PC-9 (cell line): ENCODE measurements at regions of chrX and their contacts with region 1.

Region 1: DNA sequence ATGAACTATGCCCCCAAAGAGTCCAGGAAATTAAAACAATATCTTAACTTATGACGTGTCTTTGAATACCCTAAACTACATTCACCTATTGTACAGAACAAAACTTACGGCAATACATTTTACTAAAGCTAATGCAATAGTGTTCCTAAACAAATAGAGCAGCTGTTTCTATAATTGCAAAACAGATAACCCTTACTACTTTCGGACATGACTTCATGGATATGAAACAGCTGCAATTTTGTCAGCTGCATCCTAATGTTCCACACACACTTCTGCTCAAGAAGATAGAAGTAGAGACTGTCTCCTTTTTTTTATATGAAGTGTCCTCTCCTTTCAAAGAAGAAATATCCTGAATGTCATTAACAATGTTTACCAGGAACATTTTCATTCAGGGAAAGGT is 174.9 kb downstream of the ACTRT1 start:
- DNase-seq: no peak
- H3K4me3 ChIP-seq: peak overlapping the region; percentile 64; the same call in 1 of the 2 replicates
- H3K27ac ChIP-seq: peak overlapping the region; percentile 73
- H3K4me1 ChIP-seq: peaks cover 33% of the 10 kb centered on the region
- H3K27me3 ChIP-seq: no peaks in the 10 kb centered on the region
- CTCF ChIP-seq: no peak

Region 2: GRCh38 chrX:127606590-127606989 is 270.7 kb before region 1 on chrX:
- CTCF ChIA-PET with region 1: no interaction called
- POLR2A ChIA-PET with region 1: interaction called, 11 read pairs
- intact Hi-C with region 1: no loop called
- DNase-seq: no peak
- H3K4me3 ChIP-seq: no peak overlapping the region
- H3K27ac ChIP-seq: no peak overlapping the region
- H3K4me1 ChIP-seq: no peaks in the 10 kb centered on the region
- H3K27me3 ChIP-seq: no peaks in the 10 kb centered on the region
- CTCF ChIP-seq: no peak

Region 3: GRCh38 chrX:127702526-127702925 is 174.8 kb before region 1 on chrX:
- CTCF ChIA-PET with region 1: no interaction called
- POLR2A ChIA-PET with region 1: no interaction called
- intact Hi-C with region 1: no loop called
- DNase-seq: no peak
- H3K4me3 ChIP-seq: no peak overlapping the region
- H3K27ac ChIP-seq: no peak overlapping the region
- H3K4me1 ChIP-seq: peaks cover 4% of the 10 kb centered on the region
- H3K27me3 ChIP-seq: no peaks in the 10 kb centered on the region
- CTCF ChIP-seq: no peak

Region 4: GRCh38 chrX:128020708-128021107 is 143.4 kb after region 1 on chrX:
- CTCF ChIA-PET with region 1: no interaction called
- POLR2A ChIA-PET with region 1: no interaction called
- intact Hi-C with region 1: loop called (anchors 2 kb)
- DNase-seq: peak; percentile 49 to 98
- H3K4me3 ChIP-seq: no peak overlapping the region
- H3K27ac ChIP-seq: peak overlapping the region; percentile 61
- H3K4me1 ChIP-seq: peaks cover 19% of the 10 kb centered on the region
- H3K27me3 ChIP-seq: no peaks in the 10 kb centered on the region
- CTCF ChIP-seq: no peak

Region 5: DNA sequence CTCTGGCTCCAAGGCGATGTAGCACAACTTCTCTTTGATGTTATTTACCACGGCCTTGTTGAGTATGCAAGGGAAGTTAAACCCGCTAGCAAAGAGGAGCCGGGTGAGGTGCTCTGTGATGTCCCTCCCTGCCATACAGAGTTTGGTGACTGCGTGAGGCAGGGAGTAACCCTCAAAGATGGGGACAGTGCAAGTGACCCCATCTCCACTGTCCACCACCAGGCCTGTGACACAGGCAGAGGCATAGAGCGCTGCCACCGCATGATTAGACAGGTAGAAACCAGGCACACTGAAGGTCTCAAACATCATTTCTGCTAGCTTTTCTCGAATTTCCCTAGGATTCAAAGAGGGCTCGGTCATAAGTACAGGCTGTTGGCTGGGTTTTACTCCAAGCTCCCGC is 174.2 kb after region 1 on chrX:
- CTCF ChIA-PET with region 1: no interaction called
- POLR2A ChIA-PET with region 1: no interaction called
- intact Hi-C with region 1: no loop called
- DNase-seq: no peak
- H3K4me3 ChIP-seq: no peak overlapping the region
- H3K27ac ChIP-seq: no peak overlapping the region
- H3K4me1 ChIP-seq: no peaks in the 10 kb centered on the region
- H3K27me3 ChIP-seq: no peaks in the 10 kb centered on the region
- CTCF ChIP-seq: no peak